Activated CD4-positive, alpha-beta T cell treated with anti-CD3 and anti-CD28 coated beads, Interleukin-2, amount 10 ng/mL, durations not matched to agents 24 days and 14 days (primary cell): ENCODE measurements at regions of chrX and their contacts with region 1.

Region 1: GRCh38 chrX:132022967-132023895 is at the start of gene STK26:
- DNase-seq: peak; percentile 94
- H3K4me3 Mint-ChIP-seq: peak within 1 kb of the TSS; percentile 95
- H3K27ac Mint-ChIP-seq: peak within 1 kb of the TSS; percentile 95
- H3K4me1 Mint-ChIP-seq: peaks cover 15% of the 10 kb centered on the region
- H3K27me3 Mint-ChIP-seq: no peaks in the 10 kb centered on the region
- total RNA-seq, gene STK26: 66.0 and 72.5 TPM in 2 replicates

Region 2: GRCh38 chrX:131216828-131217227 is 806.4 kb before region 1 on chrX:
- intact Hi-C with region 1: no loop called
- DNase-seq: no peak
- H3K4me3 Mint-ChIP-seq: no peak overlapping the region
- H3K27ac Mint-ChIP-seq: no peak overlapping the region
- H3K4me1 Mint-ChIP-seq: no peaks in the 10 kb centered on the region
- H3K27me3 Mint-ChIP-seq: no peaks in the 10 kb centered on the region

Region 3: DNA sequence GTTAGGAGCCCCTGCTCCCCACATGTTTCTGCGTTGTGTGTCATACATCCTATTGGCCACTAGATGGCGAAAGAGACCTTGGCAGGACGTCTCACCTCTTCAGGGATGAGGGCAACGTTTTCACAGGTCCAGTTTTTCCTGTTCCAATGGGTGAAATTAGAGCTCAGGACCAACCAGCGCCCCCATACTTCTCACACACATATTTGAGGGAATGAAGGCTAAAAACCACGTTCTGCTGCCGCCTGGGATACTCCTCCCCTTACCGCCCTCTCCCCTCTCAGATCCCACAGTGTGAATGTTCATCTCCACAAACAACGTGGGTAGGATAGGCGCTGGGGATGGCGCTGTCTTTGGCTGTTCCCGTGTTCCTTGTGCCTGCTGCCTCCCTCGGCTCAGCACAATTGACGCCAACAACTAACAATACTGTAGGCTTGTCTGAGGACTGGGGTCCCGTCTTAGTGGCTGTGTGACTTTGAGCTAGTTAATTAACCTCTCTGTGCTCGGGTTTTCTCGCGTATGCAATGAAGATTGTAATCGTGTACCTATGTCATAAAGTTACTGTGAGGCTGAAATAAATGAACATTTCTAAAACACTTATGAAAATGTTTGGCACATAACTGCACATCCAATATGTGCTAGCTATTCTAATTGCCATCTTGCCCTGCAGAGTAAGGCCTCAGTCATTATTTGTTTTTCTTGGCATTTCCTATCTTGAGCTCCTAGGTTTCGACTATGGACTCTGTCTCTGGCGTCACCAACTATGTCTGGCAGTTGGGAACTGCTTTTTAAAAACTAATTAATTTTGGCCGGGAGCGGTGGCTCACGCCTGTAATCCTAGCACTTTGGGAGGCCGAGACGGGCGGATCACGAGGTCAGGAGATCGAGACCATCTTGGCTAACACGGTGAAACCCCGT is 181.5 kb before region 1 on chrX:
- intact Hi-C with region 1: loop called (anchors 5 kb)
- DNase-seq: peak; percentile 79
- H3K4me3 Mint-ChIP-seq: no peak overlapping the region
- H3K27ac Mint-ChIP-seq: no peak overlapping the region
- H3K4me1 Mint-ChIP-seq: peaks cover 3% of the 10 kb centered on the region
- H3K27me3 Mint-ChIP-seq: no peaks in the 10 kb centered on the region

Region 4: DNA sequence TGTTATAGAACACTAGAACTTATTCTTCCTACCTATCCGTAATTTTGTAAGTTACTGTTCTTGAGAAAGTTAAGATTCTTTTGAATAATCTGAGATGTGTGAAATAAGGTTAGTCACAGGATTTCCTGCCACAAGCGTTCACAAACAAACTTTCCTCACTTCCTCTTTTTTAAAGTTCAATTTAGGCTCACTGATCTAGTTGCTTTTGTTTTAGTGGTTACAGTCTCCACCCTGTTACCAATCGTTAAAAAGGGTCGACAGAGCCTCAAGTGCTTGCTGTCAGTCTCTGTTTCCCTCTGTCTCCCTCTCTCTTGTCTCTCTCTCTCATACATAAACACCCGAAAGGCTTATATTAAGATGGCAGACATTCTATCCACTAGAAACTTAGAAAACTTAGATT is 36.0 kb before region 1 on chrX:
- intact Hi-C with region 1: loop called (anchors 2 kb)
- DNase-seq: peak; percentile 73
- H3K4me3 Mint-ChIP-seq: peak overlapping the region; percentile 70
- H3K27ac Mint-ChIP-seq: peak overlapping the region; percentile 96
- H3K4me1 Mint-ChIP-seq: peaks cover 25% of the 10 kb centered on the region
- H3K27me3 Mint-ChIP-seq: no peaks in the 10 kb centered on the region

Region 5: GRCh38 chrX:132004708-132005107 is 18.5 kb before region 1 on chrX:
- intact Hi-C with region 1: no loop called
- DNase-seq: no peak
- H3K4me3 Mint-ChIP-seq: no peak overlapping the region
- H3K27ac Mint-ChIP-seq: no peak overlapping the region
- H3K4me1 Mint-ChIP-seq: peaks cover 19% of the 10 kb centered on the region
- H3K27me3 Mint-ChIP-seq: no peaks in the 10 kb centered on the region

Region 6: DNA sequence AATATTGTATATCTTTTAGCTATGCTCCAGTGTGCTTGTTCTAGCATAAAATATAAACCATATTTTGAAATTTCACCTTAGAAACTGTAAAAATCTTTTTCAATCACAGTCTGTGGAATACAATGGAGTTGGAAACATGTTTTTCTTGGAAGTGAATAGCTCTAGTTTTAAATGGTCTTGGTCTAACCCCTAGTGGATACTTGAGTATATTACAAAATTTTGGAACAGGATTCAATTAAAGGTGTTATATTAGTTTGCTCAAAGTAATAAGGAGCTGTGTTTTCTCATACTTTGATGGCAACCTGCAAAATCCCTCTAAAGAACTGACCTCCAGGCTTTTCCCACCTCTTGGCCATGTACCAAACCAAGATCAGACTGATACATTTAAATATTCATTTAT is 48.0 kb after region 1 on chrX:
- intact Hi-C with region 1: loop called (anchors 10 kb)
- DNase-seq: no peak
- H3K4me3 Mint-ChIP-seq: no peak overlapping the region
- H3K27ac Mint-ChIP-seq: no peak overlapping the region
- H3K4me1 Mint-ChIP-seq: no peaks in the 10 kb centered on the region
- H3K27me3 Mint-ChIP-seq: no peaks in the 10 kb centered on the region

Region 7: DNA sequence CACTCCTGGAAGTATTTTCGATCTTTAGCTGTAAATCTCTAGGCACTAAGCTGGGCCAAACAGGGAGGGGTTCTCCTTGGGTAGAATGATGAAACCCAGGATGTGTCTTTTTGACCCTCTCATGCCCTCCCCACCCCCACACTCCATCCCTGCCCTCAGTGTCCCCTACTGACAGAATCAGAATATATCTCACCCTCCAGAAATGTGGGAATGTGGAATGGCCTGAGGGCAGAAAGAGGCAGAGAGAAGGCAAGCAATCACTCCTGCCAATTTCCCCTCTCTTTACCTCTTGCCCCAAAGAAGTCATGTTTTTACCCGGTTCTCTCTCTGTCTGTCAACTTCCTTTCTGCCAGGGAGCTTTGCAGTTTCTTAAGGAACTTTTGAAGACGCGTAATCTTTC is 161.6 kb after region 1 on chrX:
- intact Hi-C with region 1: no loop called
- DNase-seq: no peak
- H3K4me3 Mint-ChIP-seq: no peak overlapping the region
- H3K27ac Mint-ChIP-seq: no peak overlapping the region
- H3K4me1 Mint-ChIP-seq: no peaks in the 10 kb centered on the region
- H3K27me3 Mint-ChIP-seq: peaks cover 6% of the 10 kb centered on the region

Region 8: DNA sequence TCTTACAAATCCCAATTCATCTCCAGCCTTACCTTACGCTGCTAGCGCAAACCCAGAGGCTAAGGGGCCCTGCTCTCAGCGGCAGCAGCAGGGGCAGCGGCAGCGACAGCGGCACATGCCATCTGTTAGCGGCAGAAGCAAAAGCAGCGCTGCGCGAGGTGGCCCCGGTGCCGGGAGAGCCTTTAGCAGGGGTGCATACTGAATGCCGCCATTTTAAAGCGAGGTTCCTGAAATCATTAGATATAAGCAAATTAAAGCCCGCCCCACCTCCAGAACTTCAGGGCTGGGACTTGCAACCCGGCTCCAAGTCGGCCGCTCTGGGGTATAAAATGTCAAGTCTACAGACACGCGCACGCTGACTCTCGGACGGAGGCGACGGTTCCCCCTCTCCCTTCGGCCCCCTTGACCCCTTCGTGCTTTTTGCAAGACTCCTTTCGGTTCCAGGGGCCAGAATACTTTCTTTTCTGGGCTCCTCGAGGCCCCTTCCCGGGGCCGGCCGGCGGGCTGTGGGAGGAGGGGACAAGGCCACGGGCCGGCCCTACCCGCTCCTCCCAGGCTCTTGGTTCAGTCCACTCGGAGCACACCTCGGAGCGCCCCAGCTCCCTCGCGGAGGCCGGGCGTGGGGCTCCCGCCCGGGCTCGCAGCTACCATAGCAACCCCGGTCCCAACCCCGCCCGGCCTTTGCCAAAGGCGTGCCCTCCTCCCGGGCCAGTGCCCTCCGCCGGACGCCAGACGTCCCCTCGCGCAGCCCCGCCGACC is 465.8 kb after region 1 on chrX and contains the start of gene MBNL3:
- intact Hi-C with region 1: loop called (anchors 2 kb)
- DNase-seq: peak; percentile 87
- H3K4me3 Mint-ChIP-seq: peak within 1 kb of the TSS; percentile 93
- H3K27ac Mint-ChIP-seq: peak within 1 kb of the TSS; percentile 97
- H3K4me1 Mint-ChIP-seq: peaks cover 24% of the 10 kb centered on the region
- H3K27me3 Mint-ChIP-seq: peaks cover 10% of the 10 kb centered on the region
- total RNA-seq, gene MBNL3: 12.2 and 15.4 TPM in 2 replicates